ENCODE measurements at regions of chr1 and their contacts with region 1.

Region 1: GRCh38 chr1:205440476-205441317 is 15.1 kb downstream of the BLACAT1 start:
- DNase-seq: peak in 1 of 2 donors; percentile 47
- ATAC-seq: peak in 7 of 8 donors; percentile 44 to 70 (median 52)
- H3K4me3 ChIP-seq: peak overlapping the region in 1 of 10 donors; percentile 27
- H3K27ac ChIP-seq: peak overlapping the region in 9 of 10 donors; percentile 1 to 74 (median 40)
- H3K4me1 ChIP-seq: peaks cover 13 to 74% (median 58%) of the 10 kb centered on the region in 9 donors
- H3K27me3 ChIP-seq: peaks cover 0 to 9% (median 0%) of the 10 kb centered on the region in 7 donors
- CTCF ChIP-seq: no peak

Region 2: DNA sequence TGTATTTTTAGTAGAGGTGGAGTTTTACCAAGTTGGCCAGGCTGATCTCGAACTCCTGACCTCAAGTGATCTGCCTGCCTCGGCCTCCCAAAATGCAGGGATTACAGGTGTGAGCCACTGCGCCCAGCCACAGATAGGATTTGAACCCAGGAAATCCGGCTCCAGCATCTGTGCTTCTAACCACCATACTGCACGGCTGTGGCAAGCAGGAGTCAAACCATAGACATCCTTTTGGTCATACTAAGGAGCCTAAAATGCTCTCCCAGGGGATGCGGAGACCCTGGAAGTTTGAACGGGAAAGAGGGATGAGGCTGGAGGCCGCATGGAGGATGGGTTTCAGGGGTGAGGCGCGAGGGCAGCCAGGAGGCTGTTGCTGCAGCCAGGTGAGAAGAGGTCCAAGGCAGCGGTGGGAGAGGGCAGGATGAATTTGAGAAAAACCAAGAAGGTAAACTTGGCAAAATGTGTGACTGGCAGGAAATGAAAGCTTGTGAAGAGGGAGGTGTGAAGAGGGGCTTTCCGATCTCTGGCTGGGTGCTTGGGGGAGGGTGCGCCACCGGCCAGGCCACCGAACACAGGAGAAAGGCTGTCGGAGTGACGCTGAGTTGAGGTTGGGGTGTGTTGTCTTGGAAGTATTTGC is 39.8 kb after region 1 on chr1:
- intact Hi-C with region 1: loop called in 5 of 10 experiments (anchors 5 kb)
- DNase-seq: no peak
- ATAC-seq: no peak
- H3K4me3 ChIP-seq: no peak overlapping the region
- H3K27ac ChIP-seq: no peak overlapping the region
- H3K4me1 ChIP-seq: peaks cover 0 to 13% (median 4%) of the 10 kb centered on the region in 9 donors
- H3K27me3 ChIP-seq: peaks cover 0 to 64% (median 33%) of the 10 kb centered on the region in 7 donors
- CTCF ChIP-seq: no peak

Region 3: DNA sequence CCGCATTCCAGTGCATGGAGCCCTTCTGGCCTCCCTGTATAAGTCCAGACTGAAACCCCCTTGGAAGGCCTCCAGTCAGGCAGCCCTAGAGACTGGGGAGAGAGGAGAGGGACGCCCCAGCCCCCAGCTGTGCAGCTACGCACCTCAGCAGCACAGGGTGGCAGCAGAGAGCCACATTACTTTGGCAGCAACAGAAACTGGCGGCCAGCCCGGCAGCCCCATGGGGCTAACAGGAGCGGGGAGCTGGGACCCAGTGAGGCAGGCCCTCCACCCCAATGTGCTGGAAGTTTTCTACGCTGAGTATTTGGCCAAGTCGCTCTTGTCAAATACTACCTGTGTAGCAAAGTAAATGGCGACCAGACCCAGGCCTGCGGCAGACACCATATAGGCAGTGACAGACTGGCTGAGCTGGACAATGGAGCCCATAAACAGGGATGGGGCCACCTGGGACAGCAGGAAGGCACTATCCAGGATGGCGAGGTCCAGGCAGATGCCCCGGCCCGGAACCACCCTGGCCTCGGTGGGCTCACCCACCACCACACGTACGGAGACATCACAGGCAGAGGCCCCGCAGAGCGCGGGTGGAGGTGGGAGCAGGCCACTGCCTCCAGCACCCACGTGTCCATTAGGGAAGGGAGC is 218.4 kb after region 1 on chr1:
- intact Hi-C with region 1: no loop called
- DNase-seq: peak; percentile 77 to 86
- ATAC-seq: peak; percentile 76 to 91 (median 86)
- H3K4me3 ChIP-seq: no peak overlapping the region
- H3K27ac ChIP-seq: no peak overlapping the region
- H3K4me1 ChIP-seq: peaks cover 0 to 18% (median 8%) of the 10 kb centered on the region in 9 donors
- H3K27me3 ChIP-seq: no peaks in the 10 kb centered on the region
- CTCF ChIP-seq: peak; percentile 72 to 97 (median 88)